ENCODE measurements at regions of chr2 and their contacts with region 1.

Region 1: DNA sequence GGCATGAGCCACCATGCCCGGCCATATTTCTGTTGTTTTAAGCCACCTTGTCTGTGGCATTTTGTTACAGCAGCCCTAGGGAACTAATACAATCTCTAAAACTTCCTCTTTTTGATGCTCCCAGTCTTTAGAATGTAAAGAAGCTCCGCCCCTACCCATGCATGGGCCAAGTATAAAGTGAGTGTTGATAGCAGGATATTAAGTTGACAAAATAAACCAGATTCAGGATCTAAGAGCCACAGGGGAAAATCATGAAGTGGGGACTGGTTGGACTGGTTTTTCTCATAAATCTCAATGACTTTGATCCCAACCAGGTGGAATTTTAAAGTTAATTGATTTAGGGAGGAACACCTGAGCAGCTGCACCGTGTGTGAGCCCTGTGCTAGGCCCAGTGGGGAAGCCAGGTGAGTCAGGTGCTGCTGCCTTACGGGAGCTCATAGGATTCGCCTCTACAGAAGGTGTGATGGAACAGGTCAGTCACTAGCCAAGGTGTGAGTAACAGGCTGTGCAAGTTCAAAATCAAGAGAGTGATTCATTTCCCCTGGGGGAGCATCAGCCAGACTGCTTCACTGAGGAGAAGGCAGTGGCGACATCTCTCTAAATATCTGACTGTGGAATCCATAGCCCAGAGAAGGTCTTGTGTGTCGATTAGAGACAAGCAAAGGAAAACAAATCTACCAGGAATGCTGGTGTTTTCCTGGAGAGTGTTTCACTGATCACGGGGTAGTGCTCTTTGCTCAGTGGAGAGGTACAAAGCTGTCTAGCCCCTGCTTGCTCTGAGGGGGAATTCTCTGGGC is 63.0 kb upstream of the MSH2 start:
- DNase-seq: no peak
- H3K4me3 ChIP-seq: no peak overlapping the region
- H3K27ac ChIP-seq: no peak overlapping the region
- H3K4me1 ChIP-seq: peaks cover 9% of the 10 kb centered on the region
- H3K27me3 ChIP-seq: no peaks in the 10 kb centered on the region
- CTCF ChIP-seq: no peak
- POLR2A ChIP-seq: no peak

Region 2: GRCh38 chr2:46915811-46916630 is 423.9 kb before region 1 on chr2:
- intact Hi-C with region 1: no loop called
- DNase-seq: peak in 1 of 2 donors; percentile 96
- H3K4me3 ChIP-seq: peak overlapping the region; percentile 85 to 100
- H3K27ac ChIP-seq: peak overlapping the region; percentile 94
- H3K4me1 ChIP-seq: peaks cover 30% of the 10 kb centered on the region
- H3K27me3 ChIP-seq: no peaks in the 10 kb centered on the region
- CTCF ChIP-seq: no peak
- POLR2A ChIP-seq: no peak

Region 3: DNA sequence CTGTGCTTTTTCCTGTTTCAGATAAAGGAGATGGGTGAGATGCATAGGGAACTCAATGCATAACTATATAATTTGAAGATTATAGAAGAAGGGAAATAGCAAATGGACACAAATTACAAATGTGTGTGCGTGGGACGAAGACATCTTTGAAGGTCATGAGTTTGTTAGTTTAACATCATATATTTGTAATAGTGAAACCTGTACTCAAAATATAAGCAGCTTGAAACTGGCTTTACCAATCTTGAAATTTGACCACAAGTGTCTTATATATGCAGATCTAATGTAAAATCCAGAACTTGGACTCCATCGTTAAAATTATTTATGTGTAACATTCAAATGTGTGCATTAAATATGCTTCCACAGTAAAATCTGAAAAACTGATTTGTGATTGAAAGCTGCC is 46.6 kb after region 1 on chr2:
- intact Hi-C with region 1: loop called (anchors 10 kb)
- DNase-seq: no peak
- H3K4me3 ChIP-seq: no peak overlapping the region
- H3K27ac ChIP-seq: no peak overlapping the region
- H3K4me1 ChIP-seq: no peaks in the 10 kb centered on the region
- H3K27me3 ChIP-seq: no peaks in the 10 kb centered on the region
- CTCF ChIP-seq: no peak
- POLR2A ChIP-seq: no peak

Region 4: GRCh38 chr2:47437287-47437686 is 97.3 kb after region 1 on chr2:
- intact Hi-C with region 1: no loop called
- DNase-seq: no peak
- H3K4me3 ChIP-seq: no peak overlapping the region
- H3K27ac ChIP-seq: no peak overlapping the region
- H3K4me1 ChIP-seq: no peaks in the 10 kb centered on the region
- H3K27me3 ChIP-seq: no peaks in the 10 kb centered on the region
- CTCF ChIP-seq: peak in 1 of 3 experiments; percentile 24
- POLR2A ChIP-seq: no peak

Measured in vagina (tissue), 2 donors.